GM12878 (cell line): ENCODE measurements at regions of chr2 and their contacts with region 1.

Region 1: GRCh38 chr2:199258291-199258690 is 199.4 kb downstream of the SATB2 start:
- DNase-seq: no peak
- ATAC-seq: peak; percentile 61
- H3K4me3 ChIP-seq: no peak overlapping the region
- H3K27ac ChIP-seq: no peak overlapping the region
- H3K4me1 ChIP-seq: no peaks in the 10 kb centered on the region
- H3K27me3 ChIP-seq: no peaks in the 10 kb centered on the region
- CTCF ChIP-seq: peak; percentile 28 to 40 (median 30); a peak in 4 of 6 replicates
- EP300 ChIP-seq: no peak
- POLR2A ChIP-seq: no peak
- RAD21 ChIP-seq: peak; percentile 40; the same call in 1 of the 2 replicates

Region 2: DNA sequence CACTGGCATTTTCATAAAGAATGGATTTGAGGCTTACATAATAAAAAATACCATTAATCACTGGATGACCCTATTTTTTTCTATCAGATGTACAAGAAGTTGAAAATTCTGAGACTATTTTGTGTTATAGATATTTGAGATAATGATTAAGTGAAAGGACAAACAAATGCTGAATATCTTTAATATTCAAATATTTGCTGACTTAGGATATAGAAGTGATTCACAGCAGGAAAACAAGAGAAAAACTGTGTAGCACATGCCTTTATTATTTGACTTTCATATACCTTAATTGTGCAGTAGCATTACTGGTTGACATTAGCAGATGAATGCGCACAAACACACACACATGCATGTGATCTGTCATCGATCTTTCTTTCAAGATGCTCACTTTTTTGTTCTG is 567.1 kb before region 1 on chr2:
- CTCF ChIA-PET with region 1: no interaction called
- POLR2A ChIA-PET with region 1: no interaction called
- RAD21 ChIA-PET with region 1: no interaction called
- SMC1A ChIA-PET with region 1: no interaction called
- in situ Hi-C with region 1: no loop called
- intact Hi-C with region 1: no loop called
- DNase-seq: no peak
- ATAC-seq: no peak
- H3K4me3 ChIP-seq: no peak overlapping the region
- H3K27ac ChIP-seq: no peak overlapping the region
- H3K4me1 ChIP-seq: no peaks in the 10 kb centered on the region
- H3K27me3 ChIP-seq: no peaks in the 10 kb centered on the region
- CTCF ChIP-seq: no peak
- EP300 ChIP-seq: no peak
- POLR2A ChIP-seq: no peak
- RAD21 ChIP-seq: no peak

Region 3: DNA sequence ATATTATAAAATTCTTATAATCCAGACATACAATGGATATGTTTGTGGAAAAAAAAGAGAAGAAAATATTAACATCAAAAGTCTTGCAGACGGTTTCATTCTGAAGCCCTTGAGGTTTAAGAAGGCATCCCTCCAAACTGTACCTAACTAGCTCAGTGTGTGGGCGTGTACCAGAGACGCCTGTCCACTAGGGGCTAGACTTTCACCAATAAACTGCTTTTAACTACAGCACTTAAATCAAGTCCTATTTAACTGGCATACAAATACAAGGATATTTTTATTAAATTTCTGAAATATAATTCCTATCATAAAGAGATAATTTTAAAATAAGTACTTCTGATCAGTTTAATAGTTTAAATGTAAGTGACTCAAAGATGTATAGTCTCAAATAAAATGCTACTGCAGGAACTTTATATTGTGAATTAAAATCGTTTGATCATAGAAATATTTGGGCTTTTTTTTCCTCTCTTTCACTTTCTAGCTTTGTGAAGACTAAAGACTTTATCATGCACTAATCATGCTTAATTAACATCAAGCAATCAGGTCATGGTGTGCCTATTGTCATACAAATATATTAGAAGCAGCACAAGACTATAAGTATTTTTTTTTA is 238.3 kb before region 1 on chr2:
- CTCF ChIA-PET with region 1: interaction called, 10 read pairs
- POLR2A ChIA-PET with region 1: no interaction called
- RAD21 ChIA-PET with region 1: interaction called, 8 read pairs
- SMC1A ChIA-PET with region 1: interaction called, 10 read pairs
- in situ Hi-C with region 1: no loop called
- intact Hi-C with region 1: loop called (anchors 10 kb)
- DNase-seq: no peak
- ATAC-seq: peak; percentile 89
- H3K4me3 ChIP-seq: no peak overlapping the region
- H3K27ac ChIP-seq: no peak overlapping the region
- H3K4me1 ChIP-seq: no peaks in the 10 kb centered on the region
- H3K27me3 ChIP-seq: no peaks in the 10 kb centered on the region
- CTCF ChIP-seq: peak; percentile 29 to 51 (median 37); a peak in 4 of 6 replicates
- EP300 ChIP-seq: no peak
- POLR2A ChIP-seq: no peak
- RAD21 ChIP-seq: 0 out of 2 replicates have a peak, but pooled peaks have one; percentile 5

Region 4: GRCh38 chr2:199025146-199025545 is 233.1 kb before region 1 on chr2:
- CTCF ChIA-PET with region 1: interaction called, 10 read pairs
- POLR2A ChIA-PET with region 1: no interaction called
- RAD21 ChIA-PET with region 1: interaction called, 8 read pairs
- SMC1A ChIA-PET with region 1: interaction called, 10 read pairs
- in situ Hi-C with region 1: no loop called
- intact Hi-C with region 1: loop called (anchors 10 kb)
- DNase-seq: no peak
- ATAC-seq: no peak
- H3K4me3 ChIP-seq: no peak overlapping the region
- H3K27ac ChIP-seq: no peak overlapping the region
- H3K4me1 ChIP-seq: no peaks in the 10 kb centered on the region
- H3K27me3 ChIP-seq: no peaks in the 10 kb centered on the region
- CTCF ChIP-seq: no peak
- EP300 ChIP-seq: no peak
- POLR2A ChIP-seq: no peak
- RAD21 ChIP-seq: no peak

Region 5: DNA sequence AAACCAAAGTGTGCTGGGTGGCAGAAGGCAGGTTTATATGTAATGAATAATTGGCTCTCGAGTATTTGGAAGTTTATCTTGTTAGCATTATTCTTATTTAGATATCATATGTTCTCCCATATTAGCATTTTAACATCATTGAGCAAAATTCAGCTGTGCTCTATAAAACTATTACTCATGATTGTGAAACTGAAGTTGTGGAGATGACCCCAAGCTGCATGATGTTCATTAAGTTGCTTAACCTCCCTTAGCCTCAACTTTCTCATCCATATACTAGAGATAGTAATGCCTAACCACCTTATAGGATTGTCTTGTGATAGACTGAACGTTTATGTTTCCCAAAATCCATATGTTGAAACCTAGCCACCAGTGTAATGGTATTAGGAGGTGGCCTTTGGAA is 146.8 kb before region 1 on chr2:
- CTCF ChIA-PET with region 1: interaction called, 3 read pairs
- POLR2A ChIA-PET with region 1: no interaction called
- RAD21 ChIA-PET with region 1: no interaction called
- SMC1A ChIA-PET with region 1: interaction called, 3 read pairs
- in situ Hi-C with region 1: no loop called
- intact Hi-C with region 1: loop called (anchors 5 kb)
- DNase-seq: no peak
- ATAC-seq: no peak
- H3K4me3 ChIP-seq: no peak overlapping the region
- H3K27ac ChIP-seq: no peak overlapping the region
- H3K4me1 ChIP-seq: no peaks in the 10 kb centered on the region
- H3K27me3 ChIP-seq: no peaks in the 10 kb centered on the region
- CTCF ChIP-seq: no peak
- EP300 ChIP-seq: no peak
- POLR2A ChIP-seq: no peak
- RAD21 ChIP-seq: no peak

Region 6: DNA sequence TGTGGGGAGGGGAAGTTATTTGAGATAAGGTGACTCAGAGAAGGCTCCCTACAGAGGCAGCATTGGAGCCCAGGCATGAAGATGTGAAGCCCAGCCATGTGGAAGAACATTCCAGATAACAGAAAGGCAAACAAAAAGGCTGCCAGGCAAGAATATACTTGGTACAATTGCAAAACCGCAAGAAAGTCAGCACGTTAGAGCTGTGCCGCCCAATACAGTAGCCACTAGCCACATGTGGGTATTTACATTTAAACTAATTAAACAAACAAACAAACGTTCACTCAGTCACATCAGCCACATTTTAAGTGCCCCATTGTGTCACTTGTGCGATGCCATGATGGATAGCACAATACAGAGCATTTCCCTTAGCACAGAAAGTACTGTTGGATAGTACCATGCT is 19.8 kb after region 1 on chr2:
- CTCF ChIA-PET with region 1: no interaction called
- POLR2A ChIA-PET with region 1: no interaction called
- RAD21 ChIA-PET with region 1: no interaction called
- SMC1A ChIA-PET with region 1: no interaction called
- in situ Hi-C with region 1: no loop called
- intact Hi-C with region 1: no loop called
- DNase-seq: no peak
- ATAC-seq: no peak
- H3K4me3 ChIP-seq: no peak overlapping the region
- H3K27ac ChIP-seq: no peak overlapping the region
- H3K4me1 ChIP-seq: no peaks in the 10 kb centered on the region
- H3K27me3 ChIP-seq: no peaks in the 10 kb centered on the region
- CTCF ChIP-seq: no peak
- EP300 ChIP-seq: no peak
- POLR2A ChIP-seq: no peak
- RAD21 ChIP-seq: no peak

Region 7: GRCh38 chr2:199395311-199395710 is 137.0 kb after region 1 on chr2:
- CTCF ChIA-PET with region 1: no interaction called
- POLR2A ChIA-PET with region 1: no interaction called
- RAD21 ChIA-PET with region 1: no interaction called
- SMC1A ChIA-PET with region 1: no interaction called
- in situ Hi-C with region 1: no loop called
- intact Hi-C with region 1: no loop called
- DNase-seq: no peak
- ATAC-seq: no peak
- H3K4me3 ChIP-seq: no peak overlapping the region
- H3K27ac ChIP-seq: no peak overlapping the region
- H3K4me1 ChIP-seq: no peaks in the 10 kb centered on the region
- H3K27me3 ChIP-seq: no peaks in the 10 kb centered on the region
- CTCF ChIP-seq: no peak
- EP300 ChIP-seq: no peak
- POLR2A ChIP-seq: no peak
- RAD21 ChIP-seq: no peak